Panc1 (cell line): ENCODE measurements at regions of chr13 and their contacts with region 1.

Region 1: GRCh38 chr13:50801087-50801931 is 42.2 kb downstream of the DLEU7 start:
- DNase-seq: peak; percentile 38
- ATAC-seq: peak; percentile 87
- H3K4me3 ChIP-seq: no peak overlapping the region
- H3K27ac ChIP-seq: peak overlapping the region; percentile 66
- H3K4me1 ChIP-seq: peaks cover 9% of the 10 kb centered on the region; the same call in 1 of the 2 replicates
- H3K27me3 ChIP-seq: no peaks in the 10 kb centered on the region
- CTCF ChIP-seq: peak; percentile 74

Region 2: GRCh38 chr13:49976314-49977258 is 824.7 kb before region 1 on chr13:
- CTCF ChIA-PET with region 1: interaction called, 3 read pairs
- POLR2A ChIA-PET with region 1: no interaction called
- in situ Hi-C with region 1: no loop called
- intact Hi-C with region 1: loop called (anchors 5 kb)
- DNase-seq: peak; percentile 59
- ATAC-seq: peak; percentile 90
- H3K4me3 ChIP-seq: no peak overlapping the region
- H3K27ac ChIP-seq: no peak overlapping the region
- H3K4me1 ChIP-seq: no peaks in the 10 kb centered on the region
- H3K27me3 ChIP-seq: no peaks in the 10 kb centered on the region
- CTCF ChIP-seq: peak; percentile 85

Region 3: DNA sequence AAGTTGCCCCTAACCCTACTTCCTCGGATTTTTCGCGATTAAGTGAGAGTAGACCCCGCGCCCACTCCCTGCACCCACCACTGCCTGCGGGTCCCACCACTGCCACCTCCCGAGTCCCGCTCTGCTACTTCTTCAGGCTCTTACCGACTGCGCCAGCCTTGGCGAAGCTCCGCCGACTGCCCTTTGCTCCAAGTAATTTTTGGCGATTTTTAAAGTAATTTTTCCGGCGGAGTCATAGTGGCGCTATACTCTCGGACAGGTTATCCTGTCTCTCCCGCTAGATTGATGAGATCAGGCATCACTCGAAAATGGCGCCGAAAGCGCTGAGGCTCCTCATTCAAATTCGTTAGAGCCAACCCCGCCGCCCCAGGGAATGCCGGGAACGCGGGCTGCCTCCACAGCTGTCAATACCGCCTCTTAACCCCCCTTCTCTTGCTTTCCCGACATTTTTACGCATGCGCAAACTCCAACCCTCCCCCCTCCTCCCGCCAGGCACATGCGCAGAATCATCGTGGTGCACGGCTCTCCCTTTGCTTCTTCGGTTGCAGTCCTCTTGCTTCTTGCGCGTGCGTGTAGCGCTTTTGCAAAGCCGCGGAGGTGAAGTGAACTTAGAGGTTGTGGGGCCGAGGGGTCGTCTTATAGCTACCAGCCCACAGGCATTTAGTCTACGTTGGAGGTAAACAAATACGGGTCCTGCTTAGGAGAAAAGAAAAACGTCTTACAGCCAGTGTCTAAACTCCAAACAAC is 719.5 kb before region 1 on chr13:
- CTCF ChIA-PET with region 1: no interaction called
- POLR2A ChIA-PET with region 1: no interaction called
- in situ Hi-C with region 1: no loop called
- intact Hi-C with region 1: loop called (anchors 10 kb)
- DNase-seq: peak; percentile 94
- ATAC-seq: peak; percentile 89
- H3K4me3 ChIP-seq: peak overlapping the region; percentile 71 to 82
- H3K27ac ChIP-seq: peak overlapping the region; percentile 96
- H3K4me1 ChIP-seq: peaks cover 15% of the 10 kb centered on the region
- H3K27me3 ChIP-seq: no peaks in the 10 kb centered on the region
- CTCF ChIP-seq: peak; percentile 23

Region 4: GRCh38 chr13:50512474-50513299 is 288.6 kb before region 1 on chr13:
- CTCF ChIA-PET with region 1: no interaction called
- POLR2A ChIA-PET with region 1: no interaction called
- in situ Hi-C with region 1: no loop called
- intact Hi-C with region 1: loop called (anchors 10 kb)
- DNase-seq: no peak
- ATAC-seq: peak; percentile 90
- H3K4me3 ChIP-seq: peak overlapping the region; percentile 25 to 49
- H3K27ac ChIP-seq: peak overlapping the region; percentile 89
- H3K4me1 ChIP-seq: peaks cover 21% of the 10 kb centered on the region
- H3K27me3 ChIP-seq: no peaks in the 10 kb centered on the region
- CTCF ChIP-seq: peak; percentile 20; the same call in 1 of the 2 replicates

Region 5: DNA sequence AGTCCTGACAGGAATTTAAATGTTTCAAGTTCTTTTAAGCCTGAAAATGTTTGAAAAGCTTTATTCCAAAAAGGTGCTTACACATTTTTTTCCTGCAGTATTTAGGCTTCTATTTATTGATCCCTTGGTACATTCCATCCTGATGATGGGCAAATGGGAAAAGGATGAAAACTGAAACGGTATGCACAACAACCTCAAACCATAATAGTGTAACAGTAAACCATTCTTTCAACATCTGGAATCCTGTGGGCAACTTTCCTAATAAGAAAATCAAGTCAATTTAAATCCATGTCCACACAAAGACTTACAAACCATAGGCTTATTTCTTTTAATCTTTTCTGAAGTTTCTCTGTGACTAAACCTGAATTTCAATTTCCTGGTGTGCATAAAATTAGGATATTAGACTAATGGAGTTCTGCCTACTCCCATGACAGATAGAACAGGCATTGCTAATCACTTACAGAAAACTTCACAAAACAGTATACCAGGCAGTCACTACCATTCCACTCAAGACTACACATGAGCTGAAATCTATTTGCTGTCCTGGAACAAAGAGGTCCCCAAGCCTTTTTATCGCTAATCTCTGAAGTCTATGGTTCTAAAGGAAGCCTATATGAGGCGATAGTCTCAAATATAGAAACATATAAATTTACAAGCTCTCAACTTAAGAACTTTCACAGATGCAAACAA is 61.1 kb before region 1 on chr13:
- CTCF ChIA-PET with region 1: interaction called, 10 read pairs
- POLR2A ChIA-PET with region 1: no interaction called
- in situ Hi-C with region 1: no loop called
- intact Hi-C with region 1: no loop called
- DNase-seq: no peak
- ATAC-seq: no peak
- H3K4me3 ChIP-seq: no peak overlapping the region
- H3K27ac ChIP-seq: no peak overlapping the region
- H3K4me1 ChIP-seq: no peaks in the 10 kb centered on the region
- H3K27me3 ChIP-seq: no peaks in the 10 kb centered on the region
- CTCF ChIP-seq: no peak